GM12878 (cell line): ENCODE measurements at regions of chr2 and their contacts with region 1.

Region 1: DNA sequence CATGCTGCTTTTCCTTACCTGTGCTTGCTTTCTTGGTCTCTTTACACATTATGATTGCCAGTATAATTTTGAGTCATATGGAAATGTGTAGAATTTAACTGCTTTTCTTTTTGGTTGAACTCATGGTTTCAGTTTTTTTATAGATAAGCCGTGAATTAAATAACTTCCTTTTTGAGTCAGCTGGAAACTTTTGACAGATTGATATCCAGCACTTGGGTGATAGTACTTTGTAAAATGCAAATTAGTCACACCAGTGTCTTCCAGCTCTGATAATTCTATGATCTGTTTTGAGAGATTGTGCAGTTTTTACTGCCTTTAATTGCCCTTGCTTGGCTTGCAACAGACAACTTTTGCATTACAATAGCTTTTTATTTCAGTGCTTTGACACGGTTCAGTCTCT is 86.4 kb downstream of the NCOA1 start:
- DNase-seq: peak; percentile 89
- ATAC-seq: peak; percentile 87
- H3K4me3 ChIP-seq: 0 out of 2 replicates have a peak overlapping the region, but pooled peaks have one; percentile 14
- H3K27ac ChIP-seq: peak overlapping the region; percentile 80
- H3K4me1 ChIP-seq: peaks cover 47% of the 10 kb centered on the region
- H3K27me3 ChIP-seq: no peaks in the 10 kb centered on the region
- CTCF ChIP-seq: no peak
- EP300 ChIP-seq: peak; percentile 89 to 93
- POLR2A ChIP-seq: no peak
- RAD21 ChIP-seq: no peak

Region 2: DNA sequence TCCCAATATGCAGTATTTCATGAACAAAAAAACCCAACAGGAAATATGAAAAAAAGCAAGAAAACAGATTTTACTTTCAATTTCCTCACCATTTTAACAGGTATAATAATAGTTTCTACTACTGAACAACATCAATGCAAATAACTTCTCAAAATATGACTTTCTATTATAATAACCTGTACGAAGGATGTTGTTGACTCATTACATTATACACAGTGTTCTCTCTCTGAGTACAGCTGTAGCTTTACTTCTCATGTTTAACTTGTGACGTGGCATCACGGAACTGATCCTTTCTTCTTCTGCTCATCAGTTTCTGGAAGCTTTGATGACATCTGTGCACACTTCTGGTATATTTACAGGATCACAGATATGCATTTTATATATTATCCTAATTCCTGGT is 362.6 kb before region 1 on chr2:
- CTCF ChIA-PET with region 1: no interaction called
- POLR2A ChIA-PET with region 1: no interaction called
- RAD21 ChIA-PET with region 1: no interaction called
- SMC1A ChIA-PET with region 1: no interaction called
- in situ Hi-C with region 1: no loop called
- intact Hi-C with region 1: no loop called
- DNase-seq: peak; percentile 48
- ATAC-seq: peak; percentile 96
- H3K4me3 ChIP-seq: no peak overlapping the region
- H3K27ac ChIP-seq: peak overlapping the region; percentile 68
- H3K4me1 ChIP-seq: peaks cover 9% of the 10 kb centered on the region
- H3K27me3 ChIP-seq: no peaks in the 10 kb centered on the region
- CTCF ChIP-seq: no peak
- EP300 ChIP-seq: no peak
- POLR2A ChIP-seq: no peak
- RAD21 ChIP-seq: no peak

Region 3: DNA sequence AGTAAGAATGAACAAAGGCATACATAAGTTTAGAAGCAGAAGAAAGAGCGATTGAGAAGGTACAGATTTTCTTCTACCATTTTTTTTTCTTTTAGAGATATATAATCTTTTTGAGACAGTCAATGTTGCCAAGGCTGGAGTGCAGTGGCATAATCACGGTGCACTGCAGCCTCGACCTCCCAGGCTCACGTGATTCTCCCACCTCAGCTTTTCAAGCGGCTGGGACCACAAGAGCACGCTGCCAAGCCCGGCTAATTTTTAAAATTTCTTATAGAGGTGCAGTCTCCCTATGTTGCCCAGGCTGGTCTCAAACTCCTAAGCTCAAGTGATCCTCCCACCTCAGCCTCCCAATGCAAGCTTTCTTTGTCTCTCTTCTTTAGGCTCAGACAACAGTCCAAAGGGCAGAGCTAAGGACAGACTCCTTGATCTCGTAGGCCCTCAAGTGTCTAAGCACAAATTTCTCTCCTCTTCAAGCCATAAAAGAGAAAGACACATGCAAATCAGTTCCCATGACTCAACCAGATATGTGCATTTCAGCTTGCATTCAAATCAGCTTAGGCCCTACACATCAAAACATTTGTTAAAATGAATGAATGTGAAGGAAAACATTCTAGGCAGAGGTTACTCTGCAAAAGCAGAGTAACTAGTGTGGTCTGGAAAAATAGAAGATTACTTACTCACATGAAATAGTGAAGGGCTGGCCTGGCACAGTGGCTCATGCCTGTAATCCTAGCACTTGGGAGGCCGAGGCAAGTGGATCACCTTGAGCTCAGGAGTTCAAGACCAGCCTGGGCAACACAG is 235.2 kb before region 1 on chr2:
- CTCF ChIA-PET with region 1: no interaction called
- POLR2A ChIA-PET with region 1: no interaction called
- RAD21 ChIA-PET with region 1: no interaction called
- SMC1A ChIA-PET with region 1: no interaction called
- in situ Hi-C with region 1: no loop called
- intact Hi-C with region 1: no loop called
- DNase-seq: peak; percentile 68
- ATAC-seq: peak; percentile 81
- H3K4me3 ChIP-seq: peak overlapping the region; percentile 9; the same call in 1 of the 2 replicates
- H3K27ac ChIP-seq: peak overlapping the region; percentile 71
- H3K4me1 ChIP-seq: peaks cover 40% of the 10 kb centered on the region
- H3K27me3 ChIP-seq: no peaks in the 10 kb centered on the region
- CTCF ChIP-seq: peak in 2 of 3 experiments; percentile 12 to 40; a peak in 2 of 6 replicates
- EP300 ChIP-seq: peak in 1 of 2 experiments; percentile 22; a peak in 1 of 4 replicates
- POLR2A ChIP-seq: peak; percentile 50; the same call in 1 of the 2 replicates
- RAD21 ChIP-seq: peak; percentile 47; the same call in 1 of the 2 replicates

Region 4: DNA sequence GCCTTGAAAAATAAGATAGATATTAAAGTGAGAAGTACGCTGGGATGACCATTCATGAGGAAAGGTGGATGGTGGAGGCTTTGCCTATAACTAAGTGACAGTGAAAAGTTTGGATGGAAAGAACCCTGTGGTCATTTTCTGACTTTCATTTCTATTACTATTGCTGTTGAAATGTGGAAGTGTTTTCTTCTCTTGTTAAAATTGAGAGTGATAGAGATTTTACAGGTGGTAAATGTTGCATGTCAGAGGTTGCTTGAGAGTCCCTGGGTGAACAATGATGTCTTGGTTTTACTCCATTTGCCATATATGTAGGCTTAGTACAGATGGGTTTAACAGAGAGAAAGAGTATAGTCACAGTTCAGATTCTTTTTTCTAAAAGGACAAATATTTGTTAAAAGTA is 68.1 kb before region 1 on chr2:
- CTCF ChIA-PET with region 1: interaction called, 3 read pairs
- POLR2A ChIA-PET with region 1: interaction called, 3 read pairs
- RAD21 ChIA-PET with region 1: interaction called, 4 read pairs
- SMC1A ChIA-PET with region 1: interaction called, 7 read pairs
- in situ Hi-C with region 1: no loop called
- intact Hi-C with region 1: loop called (anchors 1 kb)
- DNase-seq: peak; percentile 72
- ATAC-seq: peak; percentile 94
- H3K4me3 ChIP-seq: peak overlapping the region; percentile 58; the same call in 1 of the 2 replicates
- H3K27ac ChIP-seq: peak overlapping the region; percentile 84
- H3K4me1 ChIP-seq: peaks cover 37% of the 10 kb centered on the region
- H3K27me3 ChIP-seq: no peaks in the 10 kb centered on the region
- CTCF ChIP-seq: no peak
- EP300 ChIP-seq: peak; percentile 40 to 84; a peak in 3 of 4 replicates
- POLR2A ChIP-seq: no peak
- RAD21 ChIP-seq: 0 out of 2 replicates have a peak, but pooled peaks have one; percentile 7

Region 5: GRCh38 chr2:24521975-24522639 is 55.4 kb before region 1 on chr2:
- CTCF ChIA-PET with region 1: interaction called, 3 read pairs
- POLR2A ChIA-PET with region 1: no interaction called
- RAD21 ChIA-PET with region 1: interaction called, 5 read pairs
- SMC1A ChIA-PET with region 1: interaction called, 14 read pairs
- in situ Hi-C with region 1: no loop called
- intact Hi-C with region 1: no loop called
- DNase-seq: no peak
- ATAC-seq: peak; percentile 69
- H3K4me3 ChIP-seq: no peak overlapping the region
- H3K27ac ChIP-seq: no peak overlapping the region
- H3K4me1 ChIP-seq: no peaks in the 10 kb centered on the region
- H3K27me3 ChIP-seq: no peaks in the 10 kb centered on the region
- CTCF ChIP-seq: no peak
- EP300 ChIP-seq: no peak
- POLR2A ChIP-seq: no peak
- RAD21 ChIP-seq: no peak

Region 6: GRCh38 chr2:24592441-24593100 is 15.1 kb after region 1 on chr2:
- CTCF ChIA-PET with region 1: interaction called, 8 read pairs
- POLR2A ChIA-PET with region 1: interaction called, 13 read pairs
- RAD21 ChIA-PET with region 1: interaction called, 26 read pairs
- SMC1A ChIA-PET with region 1: interaction called, 45 read pairs
- in situ Hi-C with region 1: no loop called
- intact Hi-C with region 1: no loop called
- DNase-seq: no peak
- ATAC-seq: no peak
- H3K4me3 ChIP-seq: no peak overlapping the region
- H3K27ac ChIP-seq: no peak overlapping the region
- H3K4me1 ChIP-seq: no peaks in the 10 kb centered on the region
- H3K27me3 ChIP-seq: no peaks in the 10 kb centered on the region
- CTCF ChIP-seq: no peak
- EP300 ChIP-seq: no peak
- POLR2A ChIP-seq: no peak
- RAD21 ChIP-seq: no peak